ENCODE measurements at regions of chr20 and their contacts with region 1.

Region 1: DNA sequence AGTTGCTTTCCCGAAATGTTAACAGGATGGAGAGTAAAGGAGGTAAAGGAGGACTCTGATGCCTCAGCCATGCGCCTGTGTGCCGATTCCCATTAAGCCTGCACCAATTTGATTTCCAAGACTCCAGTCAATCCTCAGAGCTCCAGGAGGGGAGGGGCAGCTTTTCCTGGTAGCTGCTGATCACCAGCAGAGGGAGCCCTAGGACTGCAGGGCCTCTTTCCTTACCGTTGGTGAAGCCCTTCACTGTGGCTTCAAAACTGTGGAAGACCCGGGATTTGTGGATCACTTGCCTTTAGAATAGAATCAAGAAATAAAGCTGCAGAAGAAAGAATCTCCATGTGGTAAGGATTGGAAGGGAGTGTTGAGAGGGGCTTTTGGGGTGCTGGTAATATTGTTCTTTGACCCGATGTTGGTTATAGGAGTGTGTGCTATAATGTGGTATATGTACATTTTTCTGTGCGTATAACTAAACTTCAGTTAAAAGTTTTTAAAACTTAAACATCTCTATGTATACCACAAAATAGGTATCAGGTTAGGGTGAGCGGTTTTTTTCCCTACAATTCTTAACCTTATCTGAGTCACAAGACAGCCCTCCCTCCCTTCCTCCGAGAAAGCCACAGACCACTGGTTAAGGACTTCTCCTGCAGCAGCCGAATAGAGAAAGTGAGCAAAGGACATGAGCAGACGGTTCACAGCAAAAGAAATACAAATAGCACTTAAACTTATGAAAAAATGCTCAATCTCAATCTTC is 6.9 kb upstream of the OSER1 start:
- DNase-seq: peak; percentile 83
- H3K4me3 Mint-ChIP-seq: peak overlapping the region; percentile 65
- H3K27ac Mint-ChIP-seq: peak overlapping the region; percentile 75
- H3K4me1 Mint-ChIP-seq: peaks cover 55% of the 10 kb centered on the region
- H3K27me3 Mint-ChIP-seq: no peaks in the 10 kb centered on the region

Region 2: GRCh38 chr20:43893930-43894329 is 323.6 kb before region 1 on chr20:
- CTCF ChIA-PET with region 1: no interaction called
- intact Hi-C with region 1: no loop called
- DNase-seq: no peak
- H3K4me3 Mint-ChIP-seq: no peak overlapping the region
- H3K27ac Mint-ChIP-seq: no peak overlapping the region
- H3K4me1 Mint-ChIP-seq: no peaks in the 10 kb centered on the region
- H3K27me3 Mint-ChIP-seq: peaks cover 3% of the 10 kb centered on the region

Region 3: GRCh38 chr20:44271915-44272663 is 54.6 kb after region 1 on chr20:
- CTCF ChIA-PET with region 1: interaction called, 5 read pairs
- intact Hi-C with region 1: loop called (anchors 5 kb)
- DNase-seq: peak; percentile 24
- H3K4me3 Mint-ChIP-seq: no peak overlapping the region
- H3K27ac Mint-ChIP-seq: no peak overlapping the region
- H3K4me1 Mint-ChIP-seq: no peaks in the 10 kb centered on the region
- H3K27me3 Mint-ChIP-seq: no peaks in the 10 kb centered on the region

Region 4: GRCh38 chr20:44319756-44320422 is 102.4 kb after region 1 on chr20:
- CTCF ChIA-PET with region 1: interaction called, 377 read pairs
- intact Hi-C with region 1: no loop called
- DNase-seq: no peak
- H3K4me3 Mint-ChIP-seq: no peak overlapping the region
- H3K27ac Mint-ChIP-seq: no peak overlapping the region
- H3K4me1 Mint-ChIP-seq: no peaks in the 10 kb centered on the region
- H3K27me3 Mint-ChIP-seq: no peaks in the 10 kb centered on the region

Region 5: GRCh38 chr20:44460795-44461141 is 243.3 kb after region 1 on chr20:
- CTCF ChIA-PET with region 1: interaction called, 9 read pairs
- intact Hi-C with region 1: loop called (anchors 1 kb)
- DNase-seq: no peak
- H3K4me3 Mint-ChIP-seq: no peak overlapping the region
- H3K27ac Mint-ChIP-seq: no peak overlapping the region
- H3K4me1 Mint-ChIP-seq: no peaks in the 10 kb centered on the region
- H3K27me3 Mint-ChIP-seq: no peaks in the 10 kb centered on the region

Region 6: DNA sequence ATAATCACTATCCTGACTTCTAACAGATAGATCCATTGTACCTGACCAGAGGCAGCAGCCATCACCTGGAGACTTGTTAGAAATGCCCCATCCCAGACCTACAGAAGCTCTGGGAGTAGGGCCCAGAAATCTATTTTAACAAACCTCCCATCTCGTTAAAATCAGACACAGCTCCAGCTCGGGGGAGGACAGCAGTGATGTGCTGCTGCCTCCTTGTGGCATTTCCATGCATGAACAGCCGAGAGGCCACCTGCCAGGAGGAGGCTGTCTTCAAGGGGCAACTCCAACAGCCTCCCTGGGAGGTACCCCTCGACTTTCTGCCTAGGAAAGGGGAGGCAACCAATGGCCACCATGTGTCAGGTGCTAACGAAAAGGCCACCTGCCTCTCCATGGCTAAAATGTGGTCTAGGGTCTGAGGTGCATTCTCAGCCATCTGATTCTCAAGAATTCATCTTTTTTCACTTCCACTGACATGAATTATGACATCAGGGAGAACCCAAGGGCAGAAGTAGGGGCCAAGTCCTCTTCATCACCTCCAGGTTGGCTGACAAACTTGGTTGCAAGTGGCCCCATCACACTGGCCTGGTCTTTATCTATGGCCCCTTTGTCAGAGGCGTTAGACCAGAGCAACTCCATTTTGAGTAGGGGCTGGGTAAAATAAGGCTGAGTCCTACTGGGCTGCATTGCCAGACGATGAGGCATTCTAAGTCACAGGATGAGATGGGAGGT is 516.0 kb after region 1 on chr20:
- CTCF ChIA-PET with region 1: interaction called, 3 read pairs
- intact Hi-C with region 1: loop called (anchors 5 kb)
- DNase-seq: peak; percentile 82
- H3K4me3 Mint-ChIP-seq: no peak overlapping the region
- H3K27ac Mint-ChIP-seq: no peak overlapping the region
- H3K4me1 Mint-ChIP-seq: peaks cover 27% of the 10 kb centered on the region
- H3K27me3 Mint-ChIP-seq: no peaks in the 10 kb centered on the region